PC-3 (cell line): ENCODE measurements at regions of chr19 and their contacts with region 1.

Region 1: DNA sequence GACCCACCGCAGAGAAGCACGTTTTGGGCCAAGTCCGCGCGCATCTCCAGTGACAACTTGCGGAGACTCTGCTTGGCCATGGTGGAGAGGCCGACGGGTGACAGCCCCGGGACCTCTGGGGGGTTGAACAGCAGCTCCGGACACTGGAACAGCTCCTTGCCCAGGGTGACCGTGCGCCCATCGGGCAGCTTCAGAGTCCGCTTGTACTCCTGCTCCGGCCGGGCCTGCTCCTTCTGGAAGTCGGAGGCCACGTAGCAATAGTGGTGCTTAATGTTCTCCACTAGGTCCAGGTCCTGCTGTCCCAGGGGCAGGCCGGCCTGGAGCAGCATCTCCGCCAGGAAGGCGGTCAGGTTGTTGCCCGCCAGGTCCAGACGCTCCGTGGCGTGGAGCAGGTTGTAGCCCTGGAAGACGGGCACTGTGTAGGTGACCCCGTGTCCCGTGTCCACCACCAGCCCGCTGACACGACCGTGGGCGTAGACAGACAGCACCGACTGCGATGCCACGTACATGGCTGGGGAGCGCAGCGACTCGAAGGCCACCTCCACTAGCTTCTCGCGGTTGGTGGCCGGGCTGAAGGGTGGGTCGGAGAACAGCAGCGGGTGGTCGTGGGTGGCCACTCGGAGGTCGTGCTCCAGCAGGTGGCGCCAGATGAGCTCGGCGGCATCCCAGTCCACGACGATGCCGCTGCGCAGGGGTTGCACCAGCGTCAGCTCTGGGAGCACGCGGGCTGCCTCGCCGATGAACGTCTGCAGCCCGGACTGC is 743 bp downstream of the ACTL9 start:
- DNase-seq: no peak
- ATAC-seq: no peak
- H3K4me3 ChIP-seq: no peak overlapping the region
- H3K27ac ChIP-seq: no peak overlapping the region
- H3K4me1 ChIP-seq: no peaks in the 10 kb centered on the region
- H3K27me3 ChIP-seq: peaks cover 10% of the 10 kb centered on the region
- CTCF ChIP-seq: peak; percentile 56

Region 2: DNA sequence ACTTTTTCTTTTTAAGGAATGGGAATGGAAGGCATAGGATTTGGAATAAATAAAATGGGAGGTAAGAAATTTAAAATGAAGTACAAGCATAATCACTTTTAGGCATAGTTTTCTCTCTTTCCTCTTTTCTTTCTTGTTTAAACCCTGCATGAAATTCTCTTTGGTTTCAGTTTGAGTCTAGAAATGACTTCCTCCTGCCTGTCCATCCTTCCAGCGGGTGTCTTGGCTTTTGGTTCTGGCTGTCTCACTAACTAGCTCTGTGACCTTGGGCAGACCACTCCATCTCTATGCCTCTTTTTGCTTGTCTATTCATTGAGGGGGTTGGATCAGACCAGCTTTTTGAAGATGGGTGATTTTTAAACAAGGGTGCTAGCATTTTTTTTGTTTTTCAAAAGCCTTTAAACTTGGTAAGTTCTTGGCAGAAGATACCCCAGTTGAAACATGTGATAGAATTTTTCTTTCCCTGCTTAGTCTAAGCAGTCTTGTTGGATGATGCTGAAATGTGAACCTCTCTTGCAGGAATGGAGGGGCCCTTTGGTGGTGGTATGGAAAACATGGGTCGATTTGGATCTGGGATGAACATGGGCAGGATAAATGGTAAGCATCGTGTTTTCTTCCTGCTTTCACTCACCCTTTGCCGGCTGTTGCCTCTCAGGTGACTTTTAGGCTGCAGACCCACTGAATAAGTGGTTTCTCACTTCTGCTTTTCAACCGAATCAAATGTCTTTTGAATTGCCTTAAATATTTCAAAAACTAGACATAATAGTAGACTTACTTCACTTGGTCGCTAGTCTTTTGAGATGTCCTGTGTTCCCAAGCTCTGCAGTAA is 224.0 kb before region 1 on chr19:
- CTCF ChIA-PET with region 1: interaction called, 18 read pairs
- POLR2A ChIA-PET with region 1: no interaction called
- intact Hi-C with region 1: no loop called
- DNase-seq: no peak
- ATAC-seq: no peak
- H3K4me3 ChIP-seq: no peak overlapping the region
- H3K27ac ChIP-seq: no peak overlapping the region
- H3K4me1 ChIP-seq: no peaks in the 10 kb centered on the region
- H3K27me3 ChIP-seq: no peaks in the 10 kb centered on the region
- CTCF ChIP-seq: no peak

Region 3: GRCh38 chr19:8654591-8655339 is 43.1 kb before region 1 on chr19:
- CTCF ChIA-PET with region 1: no interaction called
- POLR2A ChIA-PET with region 1: no interaction called
- intact Hi-C with region 1: loop called (anchors 2 kb)
- DNase-seq: peak; percentile 65
- ATAC-seq: peak; percentile 73
- H3K4me3 ChIP-seq: peak overlapping the region; percentile 37; the same call in 1 of the 2 replicates
- H3K27ac ChIP-seq: no peak overlapping the region
- H3K4me1 ChIP-seq: no peaks in the 10 kb centered on the region
- H3K27me3 ChIP-seq: peaks cover 56% of the 10 kb centered on the region
- CTCF ChIP-seq: peak; percentile 86

Region 4: DNA sequence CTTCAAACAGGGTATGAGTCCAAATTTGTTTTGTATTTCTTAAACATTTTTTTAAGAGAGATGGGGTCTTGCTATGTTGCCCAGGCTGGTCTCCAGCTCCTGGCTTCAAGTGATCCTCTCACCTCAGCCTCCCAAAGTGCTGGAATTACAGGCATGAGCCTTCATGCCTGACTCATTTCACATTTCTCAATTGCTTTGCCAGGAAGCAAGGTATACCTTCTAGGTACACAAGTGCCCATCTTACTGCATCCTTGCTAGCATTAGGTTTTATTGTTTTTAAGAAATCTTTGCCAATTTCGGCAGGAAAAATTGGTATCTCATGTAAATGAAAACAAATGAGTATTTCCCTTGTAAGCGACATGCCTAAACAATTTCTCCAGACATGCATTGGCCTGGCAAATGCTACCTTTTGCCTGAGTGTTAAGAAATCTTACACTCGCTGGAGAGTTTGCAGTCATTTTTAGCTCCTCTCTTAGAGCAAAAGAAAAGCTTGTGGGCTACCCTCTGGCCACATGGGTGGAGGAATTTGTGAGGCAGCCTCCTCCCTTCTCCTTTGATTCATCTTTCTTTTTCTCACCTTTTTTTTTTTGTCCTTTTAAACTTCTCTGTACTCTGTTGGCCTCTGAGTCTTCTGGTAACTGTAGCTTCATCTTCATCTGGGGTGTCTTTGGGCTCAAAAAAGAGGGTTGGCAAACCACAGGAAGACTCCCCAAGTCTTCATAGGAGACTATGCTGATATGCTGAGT is 32.2 kb before region 1 on chr19:
- CTCF ChIA-PET with region 1: no interaction called
- POLR2A ChIA-PET with region 1: no interaction called
- intact Hi-C with region 1: no loop called
- DNase-seq: no peak
- ATAC-seq: no peak
- H3K4me3 ChIP-seq: no peak overlapping the region
- H3K27ac ChIP-seq: no peak overlapping the region
- H3K4me1 ChIP-seq: no peaks in the 10 kb centered on the region
- H3K27me3 ChIP-seq: peaks cover 48% of the 10 kb centered on the region
- CTCF ChIP-seq: no peak

Region 5: GRCh38 chr19:8988204-8988603 is 290.4 kb after region 1 on chr19:
- CTCF ChIA-PET with region 1: no interaction called
- POLR2A ChIA-PET with region 1: no interaction called
- intact Hi-C with region 1: no loop called
- DNase-seq: peak; percentile 85
- ATAC-seq: 0 out of 2 replicates have a peak, but pooled peaks have one; percentile 20
- H3K4me3 ChIP-seq: no peak overlapping the region
- H3K27ac ChIP-seq: peak overlapping the region; percentile 66
- H3K4me1 ChIP-seq: peaks cover 6% of the 10 kb centered on the region; the same call in 1 of the 2 replicates
- H3K27me3 ChIP-seq: peaks cover 3% of the 10 kb centered on the region; the same call in 1 of the 2 replicates
- CTCF ChIP-seq: peak; percentile 62

Region 6: GRCh38 chr19:9086761-9087160 is 388.9 kb after region 1 on chr19 and contains the start of gene OR1M1:
- CTCF ChIA-PET with region 1: interaction called, 10 read pairs
- POLR2A ChIA-PET with region 1: no interaction called
- intact Hi-C with region 1: no loop called
- DNase-seq: no peak
- ATAC-seq: no peak
- H3K4me3 ChIP-seq: no peak within 1 kb of the TSS
- H3K27ac ChIP-seq: no peak within 1 kb of the TSS
- H3K4me1 ChIP-seq: no peaks in the 10 kb centered on the region
- H3K27me3 ChIP-seq: peaks cover 53% of the 10 kb centered on the region
- CTCF ChIP-seq: no peak
- total RNA-seq, gene OR1M1: not detected in 2 replicates